ENCODE measurements at regions of chr9 and their contacts with region 1.

Region 1: DNA sequence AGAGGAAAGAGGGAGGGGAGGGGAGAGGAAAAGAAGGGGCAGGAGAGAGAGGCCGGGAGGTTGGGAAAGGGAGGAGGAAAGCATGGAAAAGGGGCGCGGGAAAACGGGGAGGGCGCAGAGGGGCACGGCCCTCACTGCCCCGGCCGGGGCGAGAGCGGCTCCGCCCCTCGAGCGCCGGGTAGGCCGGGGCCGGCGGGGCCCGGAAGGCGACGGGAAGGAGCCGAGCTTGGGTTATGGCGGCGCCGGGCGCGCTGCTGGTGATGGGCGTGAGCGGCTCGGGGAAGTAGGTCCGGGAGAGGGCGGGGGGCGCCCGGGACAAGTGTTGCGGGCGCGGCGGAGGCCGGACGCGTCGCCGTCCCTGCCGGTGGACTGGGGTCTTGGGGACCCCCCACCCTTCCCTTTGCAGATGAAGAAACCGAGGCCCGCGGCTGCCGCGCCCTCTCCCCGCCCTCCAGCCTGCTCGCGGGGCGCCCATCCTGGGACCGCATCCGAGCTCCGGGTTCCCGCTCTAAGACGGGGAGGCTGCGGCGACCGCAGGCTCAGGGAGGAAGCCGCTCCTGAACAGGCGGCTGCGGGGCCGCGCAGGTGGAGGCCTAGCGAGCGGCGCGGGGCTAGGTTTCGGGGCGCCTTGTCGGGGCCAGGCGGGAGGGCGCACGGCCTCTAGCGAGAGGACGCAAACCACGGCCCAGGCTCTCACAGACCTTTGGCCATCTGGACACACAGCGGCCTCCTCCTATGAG is at the start of gene IDNK:
- DNase-seq: peak; percentile 38
- H3K4me3 Mint-ChIP-seq: peak within 1 kb of the TSS; percentile 72
- H3K27ac Mint-ChIP-seq: peak within 1 kb of the TSS; percentile 93
- H3K4me1 Mint-ChIP-seq: peaks cover 24% of the 10 kb centered on the region
- H3K27me3 Mint-ChIP-seq: no peaks in the 10 kb centered on the region
- total RNA-seq, gene IDNK: 2.7 to 3.2 TPM

Region 2: DNA sequence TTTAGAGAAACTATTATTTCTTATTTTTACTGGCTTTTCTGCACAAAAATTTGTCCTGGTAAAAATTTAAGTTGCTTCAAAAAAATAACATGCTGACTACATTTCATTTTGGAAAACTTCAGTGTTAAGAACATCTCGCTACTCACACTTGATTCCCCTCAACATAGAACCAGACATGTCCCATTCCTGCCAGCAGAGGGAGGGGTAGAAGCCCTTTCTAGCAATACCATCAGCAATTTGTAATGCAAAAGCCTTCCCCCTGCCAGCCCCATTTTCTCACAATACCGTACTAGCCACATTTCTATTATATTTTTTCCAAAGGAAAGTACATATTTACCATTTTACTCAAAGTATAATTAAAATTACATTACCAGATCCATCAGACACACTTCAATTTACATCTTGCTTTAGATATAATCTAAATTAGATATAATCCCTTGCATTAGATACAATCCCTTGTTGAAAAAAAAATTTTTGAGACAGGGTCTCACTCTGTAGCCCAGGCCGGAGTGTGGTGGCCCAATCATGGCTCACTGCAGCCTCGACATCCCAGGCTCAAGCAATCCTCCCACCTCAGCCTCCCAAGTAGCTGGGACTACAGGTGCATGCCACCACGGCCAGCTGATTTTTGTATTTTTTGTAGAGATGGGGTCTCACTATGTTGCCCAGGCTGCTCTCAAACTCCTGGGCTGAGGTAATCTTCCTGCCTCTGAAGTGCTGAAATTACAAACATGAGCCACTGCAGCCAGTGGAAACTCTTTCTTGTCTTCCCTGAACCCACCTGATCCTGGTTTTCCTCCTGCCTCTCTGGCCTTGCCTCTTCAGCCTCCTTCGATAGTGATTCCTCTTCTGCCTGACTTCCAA is 39.7 kb before region 1 on chr9:
- CTCF ChIA-PET with region 1: no interaction called
- intact Hi-C with region 1: loop called (anchors 1 kb)
- DNase-seq: peak; percentile 50
- H3K4me3 Mint-ChIP-seq: no peak overlapping the region
- H3K27ac Mint-ChIP-seq: no peak overlapping the region
- H3K4me1 Mint-ChIP-seq: peaks cover 9% of the 10 kb centered on the region
- H3K27me3 Mint-ChIP-seq: no peaks in the 10 kb centered on the region

Region 3: GRCh38 chr9:83649080-83649479 is 26.0 kb after region 1 on chr9:
- CTCF ChIA-PET with region 1: interaction called, 23 read pairs
- intact Hi-C with region 1: loop called (anchors 1 kb)
- DNase-seq: peak; percentile 82
- H3K4me3 Mint-ChIP-seq: no peak overlapping the region
- H3K27ac Mint-ChIP-seq: no peak overlapping the region
- H3K4me1 Mint-ChIP-seq: peaks cover 3% of the 10 kb centered on the region
- H3K27me3 Mint-ChIP-seq: no peaks in the 10 kb centered on the region

Region 4: GRCh38 chr9:83714329-83714728 is 91.2 kb after region 1 on chr9:
- CTCF ChIA-PET with region 1: interaction called, 3 read pairs
- intact Hi-C with region 1: loop called (anchors 1 kb)
- DNase-seq: no peak
- H3K4me3 Mint-ChIP-seq: no peak overlapping the region
- H3K27ac Mint-ChIP-seq: no peak overlapping the region
- H3K4me1 Mint-ChIP-seq: peaks cover 2% of the 10 kb centered on the region
- H3K27me3 Mint-ChIP-seq: no peaks in the 10 kb centered on the region

Region 5: GRCh38 chr9:84261082-84261746 is 638.1 kb after region 1 on chr9:
- CTCF ChIA-PET with region 1: no interaction called
- intact Hi-C with region 1: loop called (anchors 1 kb)
- DNase-seq: peak; percentile 76
- H3K4me3 Mint-ChIP-seq: peak overlapping the region; percentile 7
- H3K27ac Mint-ChIP-seq: no peak overlapping the region
- H3K4me1 Mint-ChIP-seq: peaks cover 7% of the 10 kb centered on the region
- H3K27me3 Mint-ChIP-seq: no peaks in the 10 kb centered on the region

Region 6: DNA sequence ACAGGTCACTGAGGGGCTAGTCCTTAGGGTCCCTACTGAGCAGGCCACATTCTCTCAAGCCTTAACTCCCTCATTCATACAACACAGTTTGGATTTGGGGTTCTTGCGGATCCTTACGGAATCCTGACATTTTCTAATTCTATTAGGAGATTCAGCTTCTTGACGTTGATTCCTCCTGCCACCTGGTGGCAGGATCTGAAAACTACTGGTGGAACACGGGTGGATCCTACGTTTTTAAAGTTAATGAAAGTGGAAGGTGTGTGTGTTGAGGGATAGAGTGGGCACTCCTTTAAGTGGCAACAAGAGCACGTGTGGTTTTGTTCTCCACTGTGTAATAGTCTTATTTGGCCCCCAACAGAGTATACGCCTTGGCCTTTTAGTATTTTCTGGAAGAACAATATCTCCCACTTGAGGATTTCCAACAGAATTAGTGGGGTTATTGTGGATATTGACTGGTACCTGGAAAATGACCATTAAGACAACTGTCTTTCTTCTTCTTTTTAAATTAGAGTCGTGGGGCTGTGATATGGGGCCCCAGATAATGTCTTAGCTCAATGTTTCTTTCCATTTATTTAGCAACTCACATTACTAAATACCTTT is 692.3 kb after region 1 on chr9:
- CTCF ChIA-PET with region 1: no interaction called
- intact Hi-C with region 1: loop called (anchors 5 kb)
- DNase-seq: peak; percentile 79
- H3K4me3 Mint-ChIP-seq: no peak overlapping the region
- H3K27ac Mint-ChIP-seq: no peak overlapping the region
- H3K4me1 Mint-ChIP-seq: peaks cover 14% of the 10 kb centered on the region
- H3K27me3 Mint-ChIP-seq: no peaks in the 10 kb centered on the region